Activated T-helper 1 cell treated with anti-CD3 and anti-CD28 coated beads, Interleukin-12 subunit alpha, Interleukin-12 subunit beta, Interleukin-2, Interleukin-4 antibody, amounts not matched to agents 30 ng/mL and 10 ng/mL and 1 ng/mL, durations not matched to agents 14 hours and 24 hours and 36 hours (primary cell): ENCODE measurements at regions of chr2 and their contacts with region 1.

Region 1: DNA sequence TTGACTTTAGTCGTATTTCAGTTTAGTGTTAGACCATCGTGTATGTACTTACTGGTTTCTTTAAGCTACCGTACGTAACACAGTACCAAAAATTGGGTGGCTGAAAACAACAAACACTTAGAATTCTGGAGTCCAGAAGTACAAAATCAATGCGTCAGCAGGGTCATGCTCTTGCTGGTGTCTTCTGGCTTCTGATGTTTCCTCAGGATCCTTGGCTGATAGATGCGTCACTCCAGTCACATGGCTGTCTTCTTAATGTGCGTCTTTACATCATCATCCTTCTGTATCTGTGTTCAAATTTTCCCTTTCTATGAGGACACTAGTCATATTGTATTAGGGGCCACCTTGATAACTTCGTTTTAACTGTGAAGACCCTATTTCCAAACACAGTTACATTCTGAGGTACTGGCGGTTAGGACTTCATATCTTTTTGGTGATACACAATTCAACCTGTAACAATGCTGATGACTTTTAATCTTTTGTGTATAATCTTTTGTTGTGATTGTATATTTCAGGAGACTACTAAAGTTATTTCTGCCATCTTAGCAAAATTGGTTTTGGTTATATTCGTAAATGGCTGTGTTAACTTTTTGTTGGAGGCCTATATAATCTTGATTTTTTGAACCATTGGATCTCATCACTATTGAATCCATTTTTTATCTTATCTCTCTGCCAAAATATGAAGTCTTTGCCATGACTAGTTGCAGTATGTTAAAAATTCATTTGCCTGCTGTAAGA is 25.4 kb downstream of the ACTR3 start:
- DNase-seq: no peak
- H3K4me3 Mint-ChIP-seq: no peak overlapping the region
- H3K27ac Mint-ChIP-seq: no peak overlapping the region
- H3K4me1 Mint-ChIP-seq: peaks cover 50% of the 10 kb centered on the region
- H3K27me3 Mint-ChIP-seq: no peaks in the 10 kb centered on the region

Region 2: DNA sequence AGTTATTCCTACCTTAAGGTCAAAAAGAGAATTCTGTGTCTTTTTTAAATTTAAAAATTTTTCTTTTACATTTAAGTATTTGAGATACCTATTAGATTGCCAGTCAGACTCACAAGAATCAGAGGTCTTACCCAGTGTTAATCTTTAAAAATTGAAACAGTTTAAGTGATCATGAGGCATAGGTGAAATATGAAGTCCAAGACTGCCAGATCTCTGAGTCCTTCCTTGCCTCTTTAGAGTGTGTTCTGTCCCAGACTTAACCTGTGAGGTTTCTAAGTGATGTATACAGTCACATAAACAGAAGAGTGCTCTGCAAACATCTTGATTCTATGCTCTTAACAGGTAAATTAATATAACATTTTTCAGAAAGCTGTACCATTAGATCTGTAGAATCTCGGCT is 15.2 kb after region 1 on chr2:
- intact Hi-C with region 1: loop called (anchors 2 kb)
- DNase-seq: no peak
- H3K4me3 Mint-ChIP-seq: no peak overlapping the region
- H3K27ac Mint-ChIP-seq: peak overlapping the region; percentile 34
- H3K4me1 Mint-ChIP-seq: peaks cover 22% of the 10 kb centered on the region
- H3K27me3 Mint-ChIP-seq: no peaks in the 10 kb centered on the region

Region 3: GRCh38 chr2:114083717-114084387 is 168.6 kb after region 1 on chr2:
- intact Hi-C with region 1: no loop called
- DNase-seq: no peak
- H3K4me3 Mint-ChIP-seq: no peak overlapping the region
- H3K27ac Mint-ChIP-seq: no peak overlapping the region
- H3K4me1 Mint-ChIP-seq: no peaks in the 10 kb centered on the region
- H3K27me3 Mint-ChIP-seq: no peaks in the 10 kb centered on the region